ENCODE measurements at regions of chr10 and their contacts with region 1.

Region 1: DNA sequence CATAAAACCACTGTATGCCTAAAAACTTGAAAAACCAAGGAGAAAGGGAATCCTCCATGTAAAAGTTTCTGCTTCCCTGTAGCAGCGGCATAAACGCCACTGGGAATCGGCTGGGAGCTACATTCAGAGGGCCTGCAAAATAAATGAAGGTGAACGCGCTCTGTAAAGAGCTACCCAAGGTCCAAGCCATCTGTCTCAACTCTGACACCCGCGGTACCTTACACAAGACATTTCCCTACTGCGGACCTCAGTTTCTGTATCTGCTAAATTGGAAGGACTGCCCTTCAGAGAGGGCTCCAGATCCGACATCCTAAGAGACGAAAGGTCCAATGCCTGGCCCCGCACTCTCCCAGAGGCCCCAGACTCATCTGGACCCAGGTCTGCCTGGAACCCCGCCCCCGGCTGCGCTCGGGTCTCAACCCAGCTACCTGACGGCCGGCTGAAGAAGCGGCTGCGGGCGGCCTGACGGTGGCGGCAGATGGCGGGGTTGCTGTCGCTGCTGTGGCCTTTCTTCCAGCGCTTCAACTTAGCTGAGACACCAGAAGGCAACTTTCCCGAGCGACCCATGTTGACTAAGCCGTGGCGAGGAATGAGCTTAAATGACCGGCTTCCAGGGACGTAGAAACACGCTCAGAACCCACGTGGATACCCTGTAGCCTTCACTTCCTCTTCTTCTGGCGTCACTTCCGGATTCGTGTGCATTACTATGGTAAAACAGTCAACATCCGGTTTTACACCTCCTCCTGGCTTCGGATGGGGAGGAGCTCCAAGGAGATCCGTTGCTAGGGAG is at the start of gene RRP12:
- DNase-seq: peak; percentile 98
- ATAC-seq: peak; percentile 92
- H3K4me3 ChIP-seq: peak within 1 kb of the TSS; percentile 64 to 80
- H3K27ac ChIP-seq: peak within 1 kb of the TSS; percentile 50
- H3K4me1 ChIP-seq: peaks cover 0 to 13% of the 10 kb centered on the region in 2 experiments; a peak in 2 of 4 replicates
- H3K27me3 ChIP-seq: no peaks in the 10 kb centered on the region
- CTCF ChIP-seq: no peak
- POLR2A ChIP-seq: peak; percentile 42
- RAD21 ChIP-seq: no peak
- total RNA-seq, gene RRP12: 67.0 TPM

Region 2: GRCh38 chr10:96664563-96664962 is 736.3 kb before region 1 on chr10:
- CTCF ChIA-PET with region 1: no interaction called
- POLR2A ChIA-PET with region 1: no interaction called
- RAD21 ChIA-PET with region 1: no interaction called
- intact Hi-C with region 1: no loop called
- DNase-seq: no peak
- ATAC-seq: no peak
- H3K4me3 ChIP-seq: no peak overlapping the region
- H3K27ac ChIP-seq: no peak overlapping the region
- H3K4me1 ChIP-seq: no peaks in the 10 kb centered on the region
- H3K27me3 ChIP-seq: no peaks in the 10 kb centered on the region
- CTCF ChIP-seq: no peak
- POLR2A ChIP-seq: no peak
- RAD21 ChIP-seq: no peak

Region 3: DNA sequence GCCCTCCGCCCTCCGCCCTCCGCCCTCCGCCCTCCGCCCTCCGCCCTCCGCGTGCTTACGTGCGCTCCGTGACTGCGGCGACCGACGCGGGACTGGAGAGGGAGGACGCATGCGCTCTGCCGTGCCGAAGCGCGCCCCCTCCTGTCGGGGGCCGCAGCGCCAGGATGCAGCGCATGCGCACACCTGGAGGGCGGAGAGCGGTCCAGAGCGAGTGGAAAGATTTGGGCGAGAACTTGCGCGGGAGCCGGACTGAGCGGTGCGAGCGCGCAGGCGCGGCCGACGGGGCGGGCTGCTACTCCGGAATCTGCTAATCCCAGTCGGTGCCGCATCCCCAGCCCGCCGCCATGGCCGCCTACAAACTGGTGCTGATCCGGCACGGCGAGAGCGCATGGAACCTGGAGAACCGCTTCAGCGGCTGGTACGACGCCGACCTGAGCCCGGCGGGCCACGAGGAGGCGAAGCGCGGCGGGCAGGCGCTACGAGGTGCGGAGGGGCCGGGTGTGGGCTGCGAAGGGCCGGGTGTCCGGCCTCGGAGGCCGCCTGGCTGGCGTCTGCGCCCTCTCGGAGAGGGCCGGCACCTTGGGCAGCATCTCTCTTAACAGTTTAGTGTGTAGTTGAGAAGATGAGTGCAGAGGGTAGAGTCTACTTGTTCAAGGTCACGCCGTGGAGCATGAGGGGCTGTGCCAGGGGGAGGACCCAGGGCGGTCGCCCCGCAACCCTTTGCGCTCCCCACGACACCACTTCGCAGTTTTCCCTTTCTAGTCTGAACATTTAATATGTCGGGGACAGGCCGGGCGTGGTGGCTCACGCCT is 25.3 kb after region 1 on chr10 and contains the start of gene PGAM1:
- CTCF ChIA-PET with region 1: no interaction called
- POLR2A ChIA-PET with region 1: no interaction called
- RAD21 ChIA-PET with region 1: no interaction called
- intact Hi-C with region 1: loop called (anchors 1 kb)
- DNase-seq: peak; percentile 92
- ATAC-seq: peak; percentile 89
- H3K4me3 ChIP-seq: peak within 1 kb of the TSS; percentile 87 to 98
- H3K27ac ChIP-seq: peak within 1 kb of the TSS; percentile 96
- H3K4me1 ChIP-seq: peaks cover 8 to 32% of the 10 kb centered on the region in 2 experiments
- H3K27me3 ChIP-seq: no peaks in the 10 kb centered on the region
- CTCF ChIP-seq: peak in 2 of 3 experiments; percentile 45 to 69; a peak in 4 of 6 replicates
- POLR2A ChIP-seq: peak; percentile 47
- RAD21 ChIP-seq: no peak
- total RNA-seq, gene PGAM1: 497 TPM

Measured in HCT116 (cell line).